AG04450 (cell line): ENCODE measurements at regions of chr20 and their contacts with region 1.

Region 1: GRCh38 chr20:33791959-33792597 is 19.1 kb upstream of the CHMP4B start:
- DNase-seq: no peak
- H3K4me3 ChIP-seq: no peak overlapping the region
- H3K27ac ChIP-seq: no peak overlapping the region
- H3K27me3 ChIP-seq: no peaks in the 10 kb centered on the region
- CTCF ChIP-seq: peak; percentile 75

Region 2: DNA sequence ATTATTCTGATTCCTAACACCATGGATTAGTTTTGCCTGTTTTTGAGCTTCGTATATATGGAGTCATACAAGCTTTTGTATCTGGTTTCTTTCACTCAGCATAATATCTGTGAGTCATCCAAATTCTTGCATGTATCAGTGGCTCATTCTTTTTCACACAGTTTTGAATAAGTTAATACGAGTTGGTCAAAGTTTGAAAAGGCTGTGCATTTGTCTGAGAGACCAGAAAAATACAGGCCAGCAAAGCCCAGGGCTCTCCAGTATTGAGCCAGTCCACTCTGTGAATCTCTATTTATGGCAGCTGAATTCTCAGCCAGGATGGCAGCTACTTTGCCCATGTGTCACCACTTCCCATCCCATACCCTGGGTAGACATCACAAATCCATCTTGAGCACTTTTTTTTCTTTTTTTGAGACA is 11.9 kb after region 1 on chr20:
- CTCF ChIA-PET with region 1: interaction called, 23 read pairs
- POLR2A ChIA-PET with region 1: no interaction called
- DNase-seq: peak; percentile 43
- H3K4me3 ChIP-seq: no peak overlapping the region
- H3K27ac ChIP-seq: peak overlapping the region; percentile 59
- H3K27me3 ChIP-seq: no peaks in the 10 kb centered on the region
- CTCF ChIP-seq: no peak

Region 3: DNA sequence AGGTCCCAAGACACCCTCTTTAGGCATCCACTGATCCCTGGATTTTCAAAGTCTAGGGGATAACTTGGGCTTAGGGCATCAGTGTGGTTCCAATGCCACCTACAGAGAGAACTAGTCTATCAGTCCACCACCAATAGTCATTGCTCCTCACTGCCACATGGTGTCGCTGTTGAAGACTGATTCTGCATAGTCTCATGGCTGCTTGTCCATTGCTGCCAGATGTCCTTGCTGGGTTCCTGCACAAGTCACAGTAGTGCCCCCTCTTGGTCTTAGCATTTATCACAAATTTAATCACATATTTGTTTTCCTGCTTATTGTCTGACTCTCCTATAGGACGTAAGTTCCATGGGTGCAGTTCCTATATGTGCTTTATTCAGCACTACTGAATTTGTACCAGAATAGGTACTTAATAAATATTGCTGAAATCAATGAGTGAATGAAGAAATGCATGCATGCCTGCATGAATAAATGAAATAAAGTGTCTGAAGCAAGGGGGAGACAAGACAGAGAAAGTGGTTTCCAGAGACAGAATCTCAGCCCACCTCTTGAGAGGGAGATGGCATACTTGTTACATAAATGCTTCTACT is 155.7 kb after region 1 on chr20:
- CTCF ChIA-PET with region 1: no interaction called
- POLR2A ChIA-PET with region 1: no interaction called
- DNase-seq: no peak
- H3K4me3 ChIP-seq: no peak overlapping the region
- H3K27ac ChIP-seq: no peak overlapping the region
- H3K27me3 ChIP-seq: peaks cover 17% of the 10 kb centered on the region
- CTCF ChIP-seq: peak; percentile 41

Region 4: DNA sequence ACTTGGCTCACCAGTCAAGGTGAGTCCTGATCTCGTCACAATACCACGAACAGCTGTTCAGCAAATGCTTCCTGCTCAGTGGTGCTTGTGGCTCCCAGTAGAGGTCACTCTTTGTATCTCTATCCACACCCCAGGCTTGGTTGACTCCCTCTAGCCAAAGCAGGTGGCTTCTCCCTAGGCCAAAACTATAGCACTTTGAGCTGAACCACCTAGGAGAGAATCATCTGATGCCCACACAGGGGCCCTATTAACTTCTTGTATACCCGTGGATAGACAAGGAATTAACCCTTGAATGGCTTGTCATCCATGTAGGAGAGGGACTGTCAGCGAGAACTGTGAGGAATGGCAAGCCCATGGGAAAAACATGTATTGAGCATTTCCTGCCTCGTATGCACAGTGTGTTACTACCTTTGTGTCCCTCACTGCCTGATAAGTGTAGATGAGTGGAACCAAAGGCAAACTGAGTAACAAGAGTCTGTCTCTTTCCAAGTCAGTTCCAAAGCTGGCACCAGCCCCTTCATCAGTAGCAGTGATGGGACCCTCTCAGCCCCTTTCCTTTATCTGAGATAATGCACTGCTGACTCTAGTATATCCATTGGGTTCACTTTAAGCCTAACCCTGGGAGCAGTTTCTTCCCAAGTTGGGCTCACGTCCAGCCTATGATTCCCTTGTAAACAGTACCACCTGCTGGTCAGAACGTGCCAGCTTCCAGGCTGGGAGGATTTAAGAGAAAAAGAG is 277.4 kb after region 1 on chr20:
- CTCF ChIA-PET with region 1: interaction called, 11 read pairs
- POLR2A ChIA-PET with region 1: no interaction called
- DNase-seq: peak; percentile 69
- H3K4me3 ChIP-seq: no peak overlapping the region
- H3K27ac ChIP-seq: no peak overlapping the region
- H3K27me3 ChIP-seq: no peaks in the 10 kb centered on the region
- CTCF ChIP-seq: peak; percentile 92

Region 5: DNA sequence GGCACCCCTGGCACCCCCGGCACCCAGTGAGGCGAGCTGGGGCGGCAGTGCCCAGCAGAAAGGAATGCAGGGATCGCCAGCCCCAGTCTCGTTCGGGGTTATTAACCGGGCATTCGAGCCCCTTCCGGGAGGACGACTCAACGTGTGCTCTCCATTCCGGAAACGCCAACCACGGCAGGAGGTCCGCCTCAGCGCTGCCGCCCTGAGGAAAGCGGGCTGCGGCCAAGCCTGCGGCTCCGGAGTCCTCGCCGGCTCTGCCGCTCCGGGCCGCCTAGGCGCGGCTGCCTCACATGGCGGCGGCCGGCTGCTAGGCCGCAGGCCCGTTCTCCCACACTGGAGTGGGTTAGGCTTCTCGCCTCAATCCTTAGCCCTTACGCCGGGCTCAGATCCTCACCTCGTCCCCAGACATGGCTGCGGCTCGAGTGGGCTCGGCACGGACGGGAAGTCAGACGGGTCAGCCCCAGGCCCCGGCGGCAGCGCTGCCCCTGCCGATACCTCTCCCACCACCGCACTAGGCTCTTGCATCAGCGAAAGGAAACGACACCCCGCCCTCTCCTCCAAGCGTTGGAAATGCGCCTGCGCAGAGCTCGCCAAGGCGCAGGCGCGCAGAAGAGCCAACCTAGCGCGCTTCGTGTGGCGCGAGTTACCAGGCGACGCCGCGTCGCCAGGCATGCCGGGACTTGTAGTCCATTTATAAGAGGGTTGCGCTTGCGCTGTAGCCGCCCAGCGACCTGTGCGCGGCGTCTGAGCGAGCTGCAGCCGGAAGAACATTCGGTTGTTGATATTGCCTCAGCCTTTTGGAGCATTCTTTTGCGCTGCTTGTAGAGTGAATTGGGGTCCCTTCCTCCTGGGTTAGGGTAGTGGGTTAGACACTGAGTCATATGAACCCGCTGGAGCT is 319.9 kb after region 1 on chr20 and contains the start of gene EIF2S2:
- CTCF ChIA-PET with region 1: interaction called, 12 read pairs
- POLR2A ChIA-PET with region 1: no interaction called
- DNase-seq: peak; percentile 99
- H3K4me3 ChIP-seq: peak within 1 kb of the TSS; percentile 94
- H3K27ac ChIP-seq: peak within 1 kb of the TSS; percentile 96
- H3K27me3 ChIP-seq: no peaks in the 10 kb centered on the region
- CTCF ChIP-seq: no peak
- polyA plus RNA-seq, gene EIF2S2: 119 and 161 TPM in 2 replicates

Region 6: GRCh38 chr20:34129518-34130162 is 337.6 kb after region 1 on chr20:
- CTCF ChIA-PET with region 1: no interaction called
- POLR2A ChIA-PET with region 1: interaction called, 11 read pairs
- DNase-seq: peak; percentile 52
- H3K4me3 ChIP-seq: no peak overlapping the region
- H3K27ac ChIP-seq: no peak overlapping the region
- H3K27me3 ChIP-seq: peaks cover 5% of the 10 kb centered on the region
- CTCF ChIP-seq: peak; percentile 82